ENCODE measurements at regions of chr15 and their contacts with region 1.

Region 1: GRCh38 chr15:31488426-31489204 is 162.0 kb downstream of the KLF13 start:
- DNase-seq: peak in 4 of 10 donors; percentile 38 to 66 (median 55)
- H3K4me3 ChIP-seq: no peak overlapping the region
- H3K27ac ChIP-seq: peak overlapping the region in 50 of 59 donors; percentile 16 to 83 (median 64)
- H3K27me3 ChIP-seq: no peaks in the 10 kb centered on the region
- CTCF ChIP-seq: peak; percentile 80 to 99 (median 93)

Region 2: GRCh38 chr15:30922480-30923311 is 565.9 kb before region 1 on chr15:
- intact Hi-C with region 1: loop called in 1 of 2 experiments (anchors 10 kb)
- DNase-seq: peak; percentile 26 to 95 (median 88)
- H3K4me3 ChIP-seq: peak overlapping the region in 37 of 59 donors; percentile 1 to 49 (median 22)
- H3K27ac ChIP-seq: peak overlapping the region; percentile 81 to 100 (median 97)
- H3K27me3 ChIP-seq: no peaks in the 10 kb centered on the region
- CTCF ChIP-seq: peak in 18 of 56 donors; percentile 5 to 38 (median 18)

Region 3: DNA sequence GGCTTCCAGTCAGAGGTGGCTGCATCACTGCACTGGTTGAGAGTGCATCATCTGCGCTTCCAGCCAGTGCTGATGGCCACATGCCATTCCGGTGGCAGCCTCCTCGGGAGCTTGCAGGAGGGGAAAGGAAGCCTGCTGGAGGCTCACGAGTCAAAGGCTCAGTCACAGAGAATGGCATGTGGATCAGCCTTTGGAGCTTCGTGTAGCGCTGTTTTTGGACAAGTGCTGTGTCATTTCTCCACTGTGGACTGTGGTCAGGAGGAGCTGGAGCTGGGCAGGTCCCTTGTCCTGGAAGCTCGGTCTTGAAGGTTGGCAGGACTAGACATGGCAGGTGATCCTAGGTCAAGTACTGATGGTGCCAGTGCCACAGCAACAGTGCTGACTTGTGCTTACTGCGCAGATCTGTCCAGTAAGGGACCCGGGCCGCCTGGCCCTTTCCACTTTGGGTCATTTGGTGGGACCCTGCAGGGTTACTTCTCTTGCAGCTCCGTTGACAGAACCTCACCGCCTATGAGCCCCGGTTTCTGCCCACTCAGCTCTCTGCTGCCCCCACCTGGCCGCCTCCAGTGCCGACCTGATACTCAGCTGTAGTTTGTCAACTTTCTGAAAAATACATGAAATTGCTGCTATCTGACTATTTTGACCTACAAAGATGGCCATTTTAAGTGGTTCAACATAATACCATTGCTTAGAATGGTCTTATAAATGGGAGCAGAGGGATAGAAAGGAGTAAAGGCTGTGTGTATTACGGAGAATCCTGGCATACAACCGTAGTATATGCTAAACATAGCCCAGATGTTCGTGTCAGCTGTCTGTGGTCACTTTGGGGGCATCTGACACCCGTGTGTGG is 359.5 kb before region 1 on chr15:
- intact Hi-C with region 1: loop called in 1 of 2 experiments (anchors 5 kb)
- DNase-seq: peak; percentile 60 to 87 (median 74)
- H3K4me3 ChIP-seq: peak overlapping the region in 16 of 59 donors; percentile 3 to 47 (median 23)
- H3K27ac ChIP-seq: peak overlapping the region in 1 of 59 donors; percentile 26
- H3K27me3 ChIP-seq: no peaks in the 10 kb centered on the region
- CTCF ChIP-seq: peak; percentile 75 to 98 (median 93)

Region 4: DNA sequence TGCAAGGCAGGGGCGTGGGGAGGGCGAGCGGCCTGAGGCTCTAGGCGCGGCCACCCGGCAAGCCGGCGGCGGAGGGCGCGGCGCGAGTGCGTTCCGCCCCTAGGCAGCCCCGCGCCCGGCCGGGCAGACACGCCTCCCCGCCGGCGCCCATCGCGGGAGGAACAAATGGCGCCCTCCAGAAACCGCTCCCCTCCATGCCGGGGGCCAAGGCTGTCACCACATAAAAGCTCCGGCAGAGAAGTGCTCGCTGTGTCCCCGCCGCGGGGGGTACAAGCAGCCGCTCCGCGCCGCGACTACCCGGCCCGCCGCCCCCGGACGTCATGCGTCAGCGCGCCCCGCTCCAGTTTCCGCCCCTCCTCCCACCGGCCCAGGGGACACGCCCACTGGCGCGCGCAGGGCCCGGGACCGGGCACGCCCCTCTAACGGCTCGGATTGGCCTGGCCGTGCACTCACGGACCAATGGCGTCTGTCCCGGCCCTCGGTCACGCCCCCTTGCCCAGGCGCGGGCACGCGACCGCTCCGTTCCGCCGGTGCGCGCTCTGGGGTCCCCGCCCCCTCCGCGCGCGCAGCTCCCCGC is 162.4 kb before region 1 on chr15:
- intact Hi-C with region 1: loop called in 1 of 2 experiments (anchors 5 kb)
- DNase-seq: peak; percentile 95 to 99 (median 97)
- H3K4me3 ChIP-seq: peak overlapping the region; percentile 63 to 98 (median 88)
- H3K27ac ChIP-seq: peak overlapping the region; percentile 94 to 100 (median 100)
- H3K27me3 ChIP-seq: no peaks in the 10 kb centered on the region
- CTCF ChIP-seq: peak in 21 of 56 donors; percentile 7 to 42 (median 20)

Region 5: DNA sequence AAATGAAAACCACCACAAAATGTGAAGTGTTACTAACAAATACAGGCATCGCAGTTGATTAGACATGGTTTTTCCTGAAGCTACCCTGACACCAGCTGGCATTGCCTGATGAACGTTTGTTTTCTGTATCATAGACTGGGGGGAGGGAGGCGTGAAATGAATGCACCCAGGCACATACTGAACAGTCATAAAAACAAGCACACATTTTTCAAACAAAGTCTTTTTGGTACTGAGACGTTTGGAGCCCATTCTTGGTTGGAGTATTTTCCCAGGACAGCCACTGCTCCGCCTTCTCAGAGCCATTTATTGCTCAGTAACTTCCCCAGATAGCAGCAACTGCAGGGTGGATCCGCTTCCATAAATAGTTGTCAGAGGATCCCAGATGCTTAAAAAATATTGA is 109.6 kb before region 1 on chr15:
- intact Hi-C with region 1: loop called in 1 of 2 experiments (anchors 5 kb)
- DNase-seq: peak in 2 of 10 donors; percentile 53 to 55
- H3K4me3 ChIP-seq: no peak overlapping the region
- H3K27ac ChIP-seq: peak overlapping the region; percentile 20 to 91 (median 75)
- H3K27me3 ChIP-seq: no peaks in the 10 kb centered on the region
- CTCF ChIP-seq: peak in 14 of 56 donors; percentile 7 to 53 (median 22)

Region 6: GRCh38 chr15:31977812-31978661 is 489.4 kb after region 1 on chr15:
- intact Hi-C with region 1: loop called (anchors 5 to 10 kb)
- DNase-seq: peak in 9 of 10 donors; percentile 53 to 82 (median 65)
- H3K4me3 ChIP-seq: peak overlapping the region in 1 of 59 donors; percentile 23
- H3K27ac ChIP-seq: no peak overlapping the region
- H3K27me3 ChIP-seq: peaks cover 0 to 23% (median 0%) of the 10 kb centered on the region in 45 donors
- CTCF ChIP-seq: peak in 55 of 56 donors; percentile 76 to 99 (median 92)